ENCODE measurements at regions of chrX and their contacts with region 1.

Region 1: GRCh38 chrX:110156167-110156754 is 153.3 kb downstream of the TMEM164 start:
- DNase-seq: no peak
- ATAC-seq: no peak
- H3K4me3 ChIP-seq: no peak overlapping the region
- H3K27ac ChIP-seq: no peak overlapping the region
- H3K4me1 ChIP-seq: peaks cover 11% of the 10 kb centered on the region
- H3K27me3 ChIP-seq: no peaks in the 10 kb centered on the region
- CTCF ChIP-seq: peak; percentile 13 to 44 (median 39); a peak in 3 of 6 replicates
- EP300 ChIP-seq: no peak
- POLR2A ChIP-seq: no peak
- RAD21 ChIP-seq: peak; percentile 31; the same call in 1 of the 2 replicates

Region 2: DNA sequence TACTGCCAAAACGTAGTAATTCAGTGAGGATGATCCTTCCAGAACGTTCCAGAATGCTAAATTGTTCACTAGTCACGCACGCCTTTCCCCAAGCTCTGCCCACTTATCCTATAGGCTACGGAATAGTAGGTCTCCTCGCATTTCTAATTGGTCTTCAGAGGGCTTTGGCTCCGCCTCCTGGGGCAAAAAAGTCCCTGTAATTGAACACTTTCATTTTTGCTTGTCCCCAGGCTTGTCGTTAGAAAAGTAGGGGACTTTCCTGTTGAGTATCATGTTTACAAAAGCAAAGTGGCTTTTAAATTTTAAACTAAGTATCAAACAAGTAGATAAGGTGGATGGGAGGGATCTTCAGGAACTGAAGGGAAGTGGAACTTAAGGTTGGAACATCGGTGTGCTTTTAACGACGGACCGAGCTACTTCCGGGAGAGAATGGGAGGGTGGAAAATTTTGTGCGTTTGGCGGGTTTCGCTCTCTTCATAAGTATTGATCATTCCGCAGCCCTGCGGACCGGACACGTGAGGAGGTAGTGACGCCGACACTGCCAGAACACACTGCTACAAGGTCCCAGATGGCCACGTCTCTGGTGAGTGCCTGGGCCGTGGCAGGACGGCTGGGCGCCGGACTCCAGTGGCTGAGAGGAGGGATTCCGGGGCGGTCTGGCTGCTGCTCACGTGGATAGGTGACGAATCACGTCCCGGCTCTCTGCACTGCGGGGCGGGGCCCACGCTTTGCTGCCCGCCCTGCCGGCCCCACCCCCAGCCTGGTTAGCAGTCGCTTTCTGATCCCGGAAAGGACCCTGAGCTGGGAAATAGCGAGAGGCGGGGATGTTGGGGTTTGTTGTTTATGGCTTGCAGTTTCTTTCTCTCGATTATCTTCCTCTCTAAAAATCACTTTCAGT is 619.6 kb before region 1 on chrX and contains the start of gene NXT2:
- CTCF ChIA-PET with region 1: no interaction called
- POLR2A ChIA-PET with region 1: no interaction called
- RAD21 ChIA-PET with region 1: no interaction called
- SMC1A ChIA-PET with region 1: no interaction called
- in situ Hi-C with region 1: no loop called
- intact Hi-C with region 1: no loop called
- DNase-seq: peak; percentile 73
- ATAC-seq: peak; percentile 99
- H3K4me3 ChIP-seq: peak within 1 kb of the TSS; percentile 64
- H3K27ac ChIP-seq: peak within 1 kb of the TSS; percentile 89
- H3K4me1 ChIP-seq: no peaks in the 10 kb centered on the region
- H3K27me3 ChIP-seq: no peaks in the 10 kb centered on the region
- CTCF ChIP-seq: no peak
- EP300 ChIP-seq: no peak; a peak in 1 of 4 replicates
- POLR2A ChIP-seq: peak; percentile 94
- RAD21 ChIP-seq: no peak
- polyA plus RNA-seq, gene NXT2: 17.4 to 30.0 TPM

Region 3: GRCh38 chrX:110032534-110033147 is 123.6 kb before region 1 on chrX:
- CTCF ChIA-PET with region 1: no interaction called
- POLR2A ChIA-PET with region 1: no interaction called
- RAD21 ChIA-PET with region 1: no interaction called
- SMC1A ChIA-PET with region 1: no interaction called
- in situ Hi-C with region 1: no loop called
- intact Hi-C with region 1: no loop called
- DNase-seq: no peak
- ATAC-seq: no peak
- H3K4me3 ChIP-seq: no peak overlapping the region
- H3K27ac ChIP-seq: no peak overlapping the region
- H3K4me1 ChIP-seq: no peaks in the 10 kb centered on the region
- H3K27me3 ChIP-seq: no peaks in the 10 kb centered on the region
- CTCF ChIP-seq: no peak
- EP300 ChIP-seq: no peak
- POLR2A ChIP-seq: no peak
- RAD21 ChIP-seq: no peak

Region 4: GRCh38 chrX:110310896-110311295 is 154.6 kb after region 1 on chrX:
- CTCF ChIA-PET with region 1: interaction called, 13 read pairs
- POLR2A ChIA-PET with region 1: no interaction called
- RAD21 ChIA-PET with region 1: interaction called, 4 read pairs
- SMC1A ChIA-PET with region 1: interaction called, 11 read pairs
- in situ Hi-C with region 1: no loop called
- intact Hi-C with region 1: no loop called
- DNase-seq: no peak
- ATAC-seq: peak; percentile 89
- H3K4me3 ChIP-seq: no peak overlapping the region
- H3K27ac ChIP-seq: no peak overlapping the region
- H3K4me1 ChIP-seq: no peaks in the 10 kb centered on the region
- H3K27me3 ChIP-seq: no peaks in the 10 kb centered on the region
- CTCF ChIP-seq: no peak
- EP300 ChIP-seq: no peak
- POLR2A ChIP-seq: no peak
- RAD21 ChIP-seq: no peak

Region 5: GRCh38 chrX:110402479-110403230 is 246.4 kb after region 1 on chrX:
- CTCF ChIA-PET with region 1: interaction called, 792 read pairs
- POLR2A ChIA-PET with region 1: no interaction called
- RAD21 ChIA-PET with region 1: interaction called, 130 read pairs
- SMC1A ChIA-PET with region 1: interaction called, 289 read pairs
- in situ Hi-C with region 1: loop called (anchors 5 kb)
- intact Hi-C with region 1: no loop called
- DNase-seq: no peak
- ATAC-seq: no peak
- H3K4me3 ChIP-seq: no peak overlapping the region
- H3K27ac ChIP-seq: no peak overlapping the region
- H3K4me1 ChIP-seq: no peaks in the 10 kb centered on the region
- H3K27me3 ChIP-seq: no peaks in the 10 kb centered on the region
- CTCF ChIP-seq: no peak
- EP300 ChIP-seq: no peak
- POLR2A ChIP-seq: no peak
- RAD21 ChIP-seq: no peak

Region 6: DNA sequence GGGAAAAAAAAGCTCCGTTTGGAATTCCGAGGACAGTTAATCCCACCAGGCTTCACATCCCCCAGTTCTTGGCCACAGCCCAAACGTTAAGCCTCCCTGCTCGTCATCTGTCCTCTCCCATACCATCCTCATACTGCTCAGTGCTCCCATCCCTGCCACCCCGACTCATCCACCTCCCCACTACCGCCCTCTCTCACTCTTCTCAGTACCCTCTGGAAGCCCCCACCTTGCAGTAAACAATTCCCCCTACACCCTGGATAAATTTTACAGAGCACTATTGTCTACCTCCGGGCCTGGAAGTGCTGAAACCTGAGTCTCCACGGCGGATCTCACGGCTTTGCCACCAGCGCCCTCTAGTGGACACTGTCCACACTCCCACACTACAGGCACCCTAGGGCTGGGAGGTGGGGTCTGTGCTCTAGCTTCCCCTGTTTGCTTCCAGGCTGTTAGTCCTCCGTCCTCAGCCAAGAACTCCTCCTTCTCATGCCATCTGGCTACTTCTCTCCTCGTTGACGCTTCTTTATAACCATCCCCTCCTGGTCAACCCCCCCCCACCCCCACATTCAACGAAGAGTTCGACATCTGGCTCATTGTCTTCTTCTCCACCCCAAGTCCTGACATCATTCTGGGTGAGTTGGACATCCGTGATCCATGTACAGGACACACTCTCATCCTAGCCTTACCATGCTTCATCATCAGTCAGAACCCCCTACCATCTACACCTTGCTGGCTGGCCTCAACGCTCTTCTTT is 256.9 kb after region 1 on chrX:
- CTCF ChIA-PET with region 1: interaction called, 792 read pairs
- POLR2A ChIA-PET with region 1: interaction called, 3 read pairs
- RAD21 ChIA-PET with region 1: interaction called, 130 read pairs
- SMC1A ChIA-PET with region 1: interaction called, 289 read pairs
- in situ Hi-C with region 1: loop called (anchors 5 kb)
- intact Hi-C with region 1: loop called (anchors 1 kb)
- DNase-seq: no peak
- ATAC-seq: peak; percentile 92
- H3K4me3 ChIP-seq: no peak overlapping the region
- H3K27ac ChIP-seq: no peak overlapping the region
- H3K4me1 ChIP-seq: peaks cover 5% of the 10 kb centered on the region
- H3K27me3 ChIP-seq: no peaks in the 10 kb centered on the region
- CTCF ChIP-seq: peak; percentile 85 to 89 (median 88)
- EP300 ChIP-seq: no peak
- POLR2A ChIP-seq: no peak
- RAD21 ChIP-seq: peak; percentile 74